Activated T-helper 1 cell treated with anti-CD3 and anti-CD28 coated beads, Interleukin-12 subunit alpha, Interleukin-12 subunit beta, Interleukin-2, Interleukin-4 antibody, amounts not matched to agents 30 ng/mL and 10 ng/mL and 1 ng/mL, durations not matched to agents 14 hours and 24 hours and 36 hours (primary cell): ENCODE measurements at regions of chr12 and their contacts with region 1.

Region 1: GRCh38 chr12:93894391-93895088 is 217.4 kb downstream of the CRADD start:
- DNase-seq: no peak
- H3K4me3 Mint-ChIP-seq: no peak overlapping the region
- H3K27ac Mint-ChIP-seq: no peak overlapping the region
- H3K4me1 Mint-ChIP-seq: peaks cover 54% of the 10 kb centered on the region
- H3K27me3 Mint-ChIP-seq: no peaks in the 10 kb centered on the region

Region 2: GRCh38 chr12:93591137-93591868 is 303.2 kb before region 1 on chr12:
- intact Hi-C with region 1: no loop called
- DNase-seq: no peak
- H3K4me3 Mint-ChIP-seq: peak overlapping the region; percentile 96
- H3K27ac Mint-ChIP-seq: peak overlapping the region; percentile 74
- H3K4me1 Mint-ChIP-seq: peaks cover 55% of the 10 kb centered on the region
- H3K27me3 Mint-ChIP-seq: peaks cover 34% of the 10 kb centered on the region

Region 3: DNA sequence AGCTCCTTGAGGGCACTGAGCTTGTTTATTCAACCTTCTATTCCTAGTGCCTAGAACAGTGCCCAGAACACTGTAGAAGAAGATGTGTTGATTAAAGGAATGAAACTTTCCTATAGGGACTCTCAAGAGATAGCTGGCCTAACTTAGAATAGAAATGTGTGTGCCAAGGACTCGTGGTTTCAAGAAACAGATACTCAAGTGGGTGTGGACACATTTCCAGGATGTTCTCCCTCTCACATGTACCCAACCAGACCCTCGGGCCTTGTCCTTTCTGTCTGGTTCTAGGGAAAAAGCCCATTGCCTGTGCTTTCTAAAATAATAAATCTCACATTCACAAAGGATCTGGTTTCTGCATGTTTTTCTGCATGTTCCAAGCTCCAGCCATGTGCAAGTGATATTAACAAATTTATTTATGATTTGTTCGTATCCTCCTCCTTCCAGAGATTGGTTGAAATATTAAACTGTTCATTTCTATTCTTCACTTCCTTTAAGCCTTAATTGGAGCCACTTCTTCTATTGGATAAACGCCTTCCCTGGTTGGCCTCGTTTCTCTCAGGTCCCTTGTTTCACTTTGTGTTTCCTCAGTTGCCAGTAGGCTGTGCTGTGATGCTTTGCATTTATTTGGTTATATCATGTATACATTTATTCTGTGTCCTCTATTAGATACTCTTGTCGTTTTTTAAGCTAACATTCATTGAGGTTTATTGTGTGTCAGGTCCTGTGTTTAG is 127.6 kb before region 1 on chr12:
- intact Hi-C with region 1: loop called (anchors 5 kb)
- DNase-seq: peak; percentile 40
- H3K4me3 Mint-ChIP-seq: peak overlapping the region; percentile 0
- H3K27ac Mint-ChIP-seq: no peak overlapping the region
- H3K4me1 Mint-ChIP-seq: peaks cover 34% of the 10 kb centered on the region
- H3K27me3 Mint-ChIP-seq: peaks cover 6% of the 10 kb centered on the region

Region 4: DNA sequence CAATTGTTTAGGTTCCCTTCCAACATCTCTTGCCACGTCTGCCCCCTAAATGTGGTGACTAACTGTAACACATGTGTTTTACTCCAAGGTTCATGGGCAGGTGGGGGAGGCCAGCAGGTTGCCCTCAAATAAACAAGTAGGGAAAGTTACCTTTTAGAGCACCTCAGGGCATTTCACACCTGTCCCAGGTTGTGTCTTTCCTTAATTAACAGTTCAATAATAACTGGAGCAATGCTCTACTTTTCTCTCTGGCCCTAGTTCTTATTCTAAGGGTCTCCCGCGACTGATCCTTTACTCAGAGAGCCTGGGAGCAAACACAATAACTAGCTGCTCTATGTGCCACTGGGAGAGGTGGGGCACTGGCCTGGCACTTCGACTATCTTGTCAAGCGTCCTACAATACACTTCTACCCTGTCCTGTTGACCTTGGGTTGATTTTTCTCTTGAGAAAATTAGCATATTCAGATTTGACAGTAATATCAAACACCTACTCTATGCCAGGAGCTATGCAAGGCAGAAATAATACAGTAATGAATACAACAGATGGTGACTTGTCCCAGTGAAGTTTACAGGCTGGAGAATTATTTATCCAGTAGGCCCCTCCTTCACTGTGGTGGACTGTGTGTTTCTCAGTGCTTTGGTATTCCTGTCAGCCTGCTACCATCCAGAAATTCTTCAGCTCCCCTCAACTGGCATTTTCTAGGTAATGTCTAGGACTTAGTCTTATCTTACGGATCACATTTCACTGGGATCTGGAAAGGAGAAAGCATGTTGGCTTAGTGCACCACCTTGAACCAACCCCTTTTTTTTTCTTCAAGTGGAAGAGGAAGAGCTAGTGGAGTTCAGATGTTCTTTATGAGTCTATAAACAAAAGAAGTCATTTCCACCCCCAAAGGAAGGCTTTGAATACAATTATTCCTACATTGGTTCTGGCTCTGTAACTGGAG is 14.8 kb before region 1 on chr12:
- intact Hi-C with region 1: loop called (anchors 1 kb)
- DNase-seq: no peak
- H3K4me3 Mint-ChIP-seq: peak overlapping the region; percentile 23
- H3K27ac Mint-ChIP-seq: peak overlapping the region; percentile 95
- H3K4me1 Mint-ChIP-seq: peaks cover 35% of the 10 kb centered on the region
- H3K27me3 Mint-ChIP-seq: no peaks in the 10 kb centered on the region